Activated CD4-positive, alpha-beta T cell treated with anti-CD3 and anti-CD28 coated beads, Interleukin-2, amount 10 ng/mL, durations not matched to agents 24 days and 14 days (primary cell): ENCODE measurements at regions of chr6 and their contacts with region 1.

Region 1: GRCh38 chr6:99746261-99746895 is 139.7 kb downstream of the PRDM13 start:
- DNase-seq: peak; percentile 86
- H3K4me3 Mint-ChIP-seq: no peak overlapping the region
- H3K27ac Mint-ChIP-seq: no peak overlapping the region
- H3K4me1 Mint-ChIP-seq: no peaks in the 10 kb centered on the region
- H3K27me3 Mint-ChIP-seq: peaks cover 31% of the 10 kb centered on the region

Region 2: DNA sequence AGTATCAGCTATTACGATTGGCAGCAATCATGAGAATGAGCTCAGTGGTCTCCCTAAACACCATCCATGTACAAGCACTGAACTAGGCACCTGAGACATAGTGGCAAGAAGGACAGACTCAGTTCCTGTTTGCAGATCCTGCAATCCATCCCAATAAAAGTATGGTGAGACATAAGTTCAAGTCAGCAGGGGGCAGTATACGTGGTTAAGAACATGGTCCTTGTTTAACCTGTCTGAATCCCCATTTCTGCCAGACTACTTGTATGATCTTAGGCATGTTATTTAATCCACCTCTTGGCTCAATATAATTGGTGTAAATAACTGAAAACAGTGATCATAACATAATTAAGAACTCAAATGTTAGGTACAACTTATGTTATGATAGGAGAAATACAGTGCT is 288.1 kb before region 1 on chr6:
- intact Hi-C with region 1: loop called (anchors 2 kb)
- DNase-seq: no peak
- H3K4me3 Mint-ChIP-seq: no peak overlapping the region
- H3K27ac Mint-ChIP-seq: no peak overlapping the region
- H3K4me1 Mint-ChIP-seq: no peaks in the 10 kb centered on the region
- H3K27me3 Mint-ChIP-seq: no peaks in the 10 kb centered on the region

Region 3: GRCh38 chr6:99467509-99468106 is 278.8 kb before region 1 on chr6:
- intact Hi-C with region 1: loop called (anchors 1 kb)
- DNase-seq: no peak
- H3K4me3 Mint-ChIP-seq: no peak overlapping the region
- H3K27ac Mint-ChIP-seq: no peak overlapping the region
- H3K4me1 Mint-ChIP-seq: no peaks in the 10 kb centered on the region
- H3K27me3 Mint-ChIP-seq: no peaks in the 10 kb centered on the region

Region 4: GRCh38 chr6:99779631-99780555 is 33.5 kb after region 1 on chr6:
- intact Hi-C with region 1: no loop called
- DNase-seq: no peak
- H3K4me3 Mint-ChIP-seq: no peak overlapping the region
- H3K27ac Mint-ChIP-seq: no peak overlapping the region
- H3K4me1 Mint-ChIP-seq: no peaks in the 10 kb centered on the region
- H3K27me3 Mint-ChIP-seq: peaks cover 9% of the 10 kb centered on the region